ENCODE measurements at regions of chr2 and their contacts with region 1.

Region 1: DNA sequence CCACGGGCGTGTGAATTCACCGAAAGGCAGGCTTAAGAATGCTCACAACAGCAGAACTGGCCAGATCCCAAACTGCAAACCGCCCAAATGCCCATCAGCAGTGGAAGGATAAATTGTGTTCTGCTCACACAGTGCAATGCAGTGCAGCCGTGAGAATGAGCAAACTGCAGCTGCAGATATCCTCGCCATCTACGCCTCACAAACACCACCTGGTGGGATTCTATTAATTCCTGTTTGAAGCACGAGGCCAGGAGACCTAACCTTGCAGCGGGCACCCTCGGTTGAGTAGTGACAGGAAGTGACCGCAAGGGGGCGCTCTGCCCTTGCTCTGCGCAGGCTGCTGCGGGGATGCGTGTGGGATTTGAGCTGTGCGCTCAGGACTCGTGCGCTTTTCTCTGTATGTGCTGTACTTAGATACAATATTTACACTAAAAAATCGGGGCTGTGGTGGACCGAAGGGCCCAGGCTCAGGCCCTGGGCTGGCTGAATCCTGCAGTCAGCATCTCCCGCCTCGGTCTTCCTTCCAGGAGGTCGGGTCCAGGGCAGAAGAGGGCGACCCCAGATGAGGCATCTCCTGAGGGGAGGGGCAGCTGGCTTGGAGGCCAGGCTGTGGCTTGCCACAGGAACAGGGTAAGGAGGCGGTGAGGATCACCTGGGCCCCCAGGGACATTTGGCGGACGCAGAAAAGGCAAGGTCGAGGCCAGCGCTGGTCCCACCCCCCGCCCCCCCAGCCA is 19.8 kb upstream of the PDIA6 start:
- DNase-seq: peak; percentile 89
- CTCF ChIP-seq: peak; percentile 93

Region 2: GRCh38 chr2:10783421-10783820 is 48.9 kb before region 1 on chr2:
- CTCF ChIA-PET with region 1: interaction called, 10 read pairs
- POLR2A ChIA-PET with region 1: no interaction called
- DNase-seq: no peak
- CTCF ChIP-seq: no peak

Region 3: GRCh38 chr2:10812362-10813162 is 19.8 kb before region 1 on chr2 and contains the start of gene PDIA6:
- CTCF ChIA-PET with region 1: interaction called, 88 read pairs
- POLR2A ChIA-PET with region 1: no interaction called
- DNase-seq: peak; percentile 98
- CTCF ChIP-seq: no peak

Region 4: DNA sequence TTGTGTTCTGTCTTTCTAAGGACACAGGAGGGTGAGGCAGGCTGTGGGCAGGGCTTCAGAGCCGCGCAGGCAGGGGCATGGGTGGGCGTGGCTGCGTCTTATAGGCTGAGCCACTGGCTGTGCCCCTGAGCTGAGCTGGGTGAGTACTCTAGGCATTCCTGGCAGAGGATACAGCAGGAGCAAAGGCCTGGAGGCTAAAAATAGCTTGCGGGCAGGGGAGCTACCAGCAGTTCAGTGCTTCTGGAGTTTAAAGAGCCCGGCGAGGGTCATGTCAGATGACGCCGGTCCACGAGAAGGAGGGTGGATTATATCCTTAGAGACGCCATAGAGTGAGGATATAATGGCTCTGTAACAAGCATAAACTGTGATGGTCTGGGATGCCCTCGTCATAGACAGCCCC is 11.7 kb after region 1 on chr2:
- CTCF ChIA-PET with region 1: interaction called, 28 read pairs
- POLR2A ChIA-PET with region 1: no interaction called
- DNase-seq: no peak
- CTCF ChIP-seq: no peak

Region 5: GRCh38 chr2:10900216-10901109 is 68.1 kb after region 1 on chr2:
- CTCF ChIA-PET with region 1: interaction called, 47 read pairs
- POLR2A ChIA-PET with region 1: no interaction called
- DNase-seq: peak; percentile 51
- CTCF ChIP-seq: peak; percentile 34

Region 6: GRCh38 chr2:10909050-10909995 is 77.0 kb after region 1 on chr2:
- CTCF ChIA-PET with region 1: interaction called, 17 read pairs
- POLR2A ChIA-PET with region 1: no interaction called
- DNase-seq: no peak
- CTCF ChIP-seq: peak; percentile 9

Region 7: GRCh38 chr2:11124503-11125068 is 292.2 kb after region 1 on chr2:
- CTCF ChIA-PET with region 1: interaction called, 129 read pairs
- POLR2A ChIA-PET with region 1: no interaction called
- DNase-seq: peak; percentile 79
- CTCF ChIP-seq: peak; percentile 80